GM12878 (cell line): ENCODE measurements at regions of chr2 and their contacts with region 1.

Region 1: GRCh38 chr2:70086838-70087701 is at the start of gene PCBP1:
- DNase-seq: peak; percentile 84
- ATAC-seq: peak; percentile 25
- H3K4me3 ChIP-seq: peak within 1 kb of the TSS; percentile 92
- H3K27ac ChIP-seq: peak within 1 kb of the TSS; percentile 100
- H3K4me1 ChIP-seq: peaks cover 35% of the 10 kb centered on the region
- H3K27me3 ChIP-seq: no peaks in the 10 kb centered on the region
- CTCF ChIP-seq: no peak
- EP300 ChIP-seq: peak in 1 of 2 experiments; percentile 10; a peak in 1 of 4 replicates
- POLR2A ChIP-seq: no peak
- RAD21 ChIP-seq: 0 out of 2 replicates have a peak, but pooled peaks have one; percentile 0
- polyA plus RNA-seq, gene PCBP1: 24.4 to 28.9 TPM

Region 2: GRCh38 chr2:70070541-70071268 is 16.4 kb before region 1 on chr2:
- CTCF ChIA-PET with region 1: interaction called, 119 read pairs
- POLR2A ChIA-PET with region 1: interaction called, 119 read pairs
- RAD21 ChIA-PET with region 1: interaction called, 91 read pairs
- SMC1A ChIA-PET with region 1: interaction called, 170 read pairs
- in situ Hi-C with region 1: no loop called
- intact Hi-C with region 1: loop called (anchors 1 kb)
- DNase-seq: no peak
- ATAC-seq: peak; percentile 86
- H3K4me3 ChIP-seq: no peak overlapping the region
- H3K27ac ChIP-seq: peak overlapping the region; percentile 89
- H3K4me1 ChIP-seq: peaks cover 18% of the 10 kb centered on the region
- H3K27me3 ChIP-seq: no peaks in the 10 kb centered on the region
- CTCF ChIP-seq: peak; percentile 80 to 90 (median 86)
- EP300 ChIP-seq: no peak
- POLR2A ChIP-seq: peak; percentile 37; the same call in 1 of the 2 replicates
- RAD21 ChIP-seq: peak; percentile 90

Region 3: DNA sequence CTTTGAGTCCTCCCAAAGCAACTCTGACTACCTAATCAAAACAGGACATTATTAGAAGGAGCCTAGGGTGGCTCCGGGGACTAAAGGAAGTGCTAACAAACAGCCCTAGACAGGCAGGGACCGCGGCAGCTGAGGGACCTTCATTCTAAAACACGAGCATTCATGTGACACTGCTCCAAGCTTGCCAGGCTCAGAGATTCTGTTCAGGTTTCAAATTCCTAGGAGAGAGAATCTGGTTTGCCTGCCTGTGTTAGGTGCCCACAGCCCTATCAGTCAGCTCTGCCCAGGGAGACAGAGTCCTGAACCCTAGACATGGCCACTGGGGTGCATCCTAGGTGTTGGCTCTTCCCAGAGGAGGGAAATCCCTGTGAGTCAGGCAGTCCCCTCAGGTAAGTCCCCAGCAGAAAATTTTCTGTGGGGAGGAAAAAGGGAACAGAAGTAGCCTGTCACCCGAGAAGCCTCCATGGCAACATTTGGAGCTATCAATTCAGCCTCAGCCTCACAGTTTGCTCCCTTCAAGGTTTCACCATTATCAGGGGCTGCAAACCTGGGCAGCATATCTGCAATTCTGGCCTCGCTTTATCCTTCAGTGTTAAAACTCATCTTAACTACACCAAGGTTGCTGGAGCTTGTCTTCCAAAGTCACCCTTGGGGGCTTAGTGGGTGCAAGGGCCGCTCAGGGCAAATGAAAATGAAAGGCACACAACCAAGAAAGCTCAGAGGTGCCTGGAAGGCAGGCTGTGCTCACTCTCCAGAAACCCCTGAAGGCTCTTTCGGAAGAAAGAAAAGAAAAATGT is 28.8 kb after region 1 on chr2:
- CTCF ChIA-PET with region 1: interaction called, 25 read pairs
- POLR2A ChIA-PET with region 1: interaction called, 187 read pairs
- RAD21 ChIA-PET with region 1: interaction called, 47 read pairs
- SMC1A ChIA-PET with region 1: interaction called, 44 read pairs
- in situ Hi-C with region 1: no loop called
- intact Hi-C with region 1: loop called (anchors 1 kb)
- DNase-seq: no peak
- ATAC-seq: peak; percentile 78
- H3K4me3 ChIP-seq: peak overlapping the region; percentile 30; the same call in 1 of the 2 replicates
- H3K27ac ChIP-seq: peak overlapping the region; percentile 88
- H3K4me1 ChIP-seq: peaks cover 51% of the 10 kb centered on the region
- H3K27me3 ChIP-seq: no peaks in the 10 kb centered on the region
- CTCF ChIP-seq: peak in 1 of 3 experiments; percentile 27; a peak in 2 of 6 replicates
- EP300 ChIP-seq: 0 out of 4 replicates have a peak, but pooled peaks of 1 of the 2 experiments have one; percentile 34
- POLR2A ChIP-seq: no peak
- RAD21 ChIP-seq: no peak

Region 4: GRCh38 chr2:70132244-70133126 is 45.4 kb after region 1 on chr2:
- CTCF ChIA-PET with region 1: interaction called, 30 read pairs
- POLR2A ChIA-PET with region 1: interaction called, 187 read pairs
- RAD21 ChIA-PET with region 1: interaction called, 181 read pairs
- SMC1A ChIA-PET with region 1: interaction called, 147 read pairs
- in situ Hi-C with region 1: loop called (anchors 5 kb)
- intact Hi-C with region 1: loop called (anchors 2 kb)
- DNase-seq: no peak
- ATAC-seq: peak; percentile 63
- H3K4me3 ChIP-seq: peak overlapping the region; percentile 67
- H3K27ac ChIP-seq: peak overlapping the region; percentile 99
- H3K4me1 ChIP-seq: peaks cover 49% of the 10 kb centered on the region
- H3K27me3 ChIP-seq: no peaks in the 10 kb centered on the region
- CTCF ChIP-seq: no peak
- EP300 ChIP-seq: no peak
- POLR2A ChIP-seq: peak; percentile 73
- RAD21 ChIP-seq: no peak

Region 5: GRCh38 chr2:70248181-70248847 is 161.2 kb after region 1 on chr2 and contains the start of gene TIA1:
- CTCF ChIA-PET with region 1: no interaction called
- POLR2A ChIA-PET with region 1: no interaction called
- RAD21 ChIA-PET with region 1: no interaction called
- SMC1A ChIA-PET with region 1: no interaction called
- in situ Hi-C with region 1: no loop called
- intact Hi-C with region 1: loop called (anchors 5 kb)
- DNase-seq: peak; percentile 96
- ATAC-seq: peak; percentile 97
- H3K4me3 ChIP-seq: peak within 1 kb of the TSS; percentile 97
- H3K27ac ChIP-seq: peak within 1 kb of the TSS; percentile 96
- H3K4me1 ChIP-seq: no peaks in the 10 kb centered on the region
- H3K27me3 ChIP-seq: no peaks in the 10 kb centered on the region
- CTCF ChIP-seq: no peak
- EP300 ChIP-seq: no peak
- POLR2A ChIP-seq: peak; percentile 89
- RAD21 ChIP-seq: no peak
- polyA plus RNA-seq, gene TIA1: 21.5 to 23.2 TPM